ENCODE measurements at regions of chr3 and their contacts with region 1.

Region 1: GRCh38 chr3:50121416-50122032 is 32.8 kb downstream of the RBM5 start:
- DNase-seq: peak; percentile 86
- H3K4me3 Mint-ChIP-seq: no peak overlapping the region
- H3K27ac Mint-ChIP-seq: no peak overlapping the region
- H3K4me1 Mint-ChIP-seq: no peaks in the 10 kb centered on the region
- H3K27me3 Mint-ChIP-seq: no peaks in the 10 kb centered on the region

Region 2: GRCh38 chr3:50133283-50133615 is 11.7 kb after region 1 on chr3:
- CTCF ChIA-PET with region 1: interaction called, 10 read pairs
- intact Hi-C with region 1: no loop called
- DNase-seq: no peak
- H3K4me3 Mint-ChIP-seq: no peak overlapping the region
- H3K27ac Mint-ChIP-seq: no peak overlapping the region
- H3K4me1 Mint-ChIP-seq: peaks cover 2% of the 10 kb centered on the region
- H3K27me3 Mint-ChIP-seq: no peaks in the 10 kb centered on the region

Region 3: DNA sequence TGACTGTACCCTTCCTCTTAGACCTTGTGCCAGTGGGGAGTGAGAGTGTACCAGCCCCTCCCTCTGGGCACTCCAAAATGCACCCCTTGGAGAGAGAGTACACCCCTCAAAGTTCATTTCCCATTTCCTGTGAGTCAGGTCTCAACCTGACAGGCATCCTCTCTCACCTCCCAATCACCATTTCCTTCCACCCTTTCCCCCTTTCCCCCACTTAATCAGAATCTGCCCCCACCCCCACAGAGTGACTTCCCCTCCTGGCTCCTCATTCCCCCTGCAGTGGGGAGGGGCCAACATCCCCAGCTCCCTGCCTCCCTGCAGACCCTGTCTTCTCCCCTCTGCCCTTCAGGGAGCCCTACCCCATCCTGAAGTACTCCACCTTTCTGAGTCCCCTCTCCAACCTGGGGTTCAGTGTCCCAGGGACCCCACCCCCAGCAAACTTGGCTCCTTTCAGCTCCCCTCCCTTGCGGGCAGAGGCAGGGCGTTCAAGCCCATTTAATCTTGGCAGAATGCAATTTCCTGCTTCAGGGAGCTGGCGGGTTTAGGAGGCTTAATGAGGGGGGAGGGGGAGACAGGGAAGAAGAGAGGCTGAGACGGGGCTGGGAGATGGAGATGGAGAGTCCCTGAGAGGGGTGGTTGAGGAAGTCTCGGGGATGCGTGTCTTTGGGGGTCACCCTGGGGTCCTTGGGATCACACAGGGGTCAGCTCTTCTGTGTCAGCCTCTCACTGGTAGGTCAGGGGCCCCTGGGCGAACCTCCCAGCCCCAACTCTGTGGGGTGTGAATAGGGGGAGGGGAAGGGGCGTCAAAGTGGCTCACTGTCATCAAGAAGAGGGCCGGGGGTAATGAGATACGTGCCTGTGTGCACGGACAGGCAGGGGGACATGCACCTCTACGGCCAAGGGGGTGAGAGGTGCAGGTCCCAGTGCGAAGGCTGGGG is 17.0 kb after region 1 on chr3:
- CTCF ChIA-PET with region 1: interaction called, 10 read pairs
- intact Hi-C with region 1: no loop called
- DNase-seq: peak; percentile 16
- H3K4me3 Mint-ChIP-seq: no peak overlapping the region
- H3K27ac Mint-ChIP-seq: no peak overlapping the region
- H3K4me1 Mint-ChIP-seq: peaks cover 10% of the 10 kb centered on the region
- H3K27me3 Mint-ChIP-seq: peaks cover 2% of the 10 kb centered on the region

Region 4: DNA sequence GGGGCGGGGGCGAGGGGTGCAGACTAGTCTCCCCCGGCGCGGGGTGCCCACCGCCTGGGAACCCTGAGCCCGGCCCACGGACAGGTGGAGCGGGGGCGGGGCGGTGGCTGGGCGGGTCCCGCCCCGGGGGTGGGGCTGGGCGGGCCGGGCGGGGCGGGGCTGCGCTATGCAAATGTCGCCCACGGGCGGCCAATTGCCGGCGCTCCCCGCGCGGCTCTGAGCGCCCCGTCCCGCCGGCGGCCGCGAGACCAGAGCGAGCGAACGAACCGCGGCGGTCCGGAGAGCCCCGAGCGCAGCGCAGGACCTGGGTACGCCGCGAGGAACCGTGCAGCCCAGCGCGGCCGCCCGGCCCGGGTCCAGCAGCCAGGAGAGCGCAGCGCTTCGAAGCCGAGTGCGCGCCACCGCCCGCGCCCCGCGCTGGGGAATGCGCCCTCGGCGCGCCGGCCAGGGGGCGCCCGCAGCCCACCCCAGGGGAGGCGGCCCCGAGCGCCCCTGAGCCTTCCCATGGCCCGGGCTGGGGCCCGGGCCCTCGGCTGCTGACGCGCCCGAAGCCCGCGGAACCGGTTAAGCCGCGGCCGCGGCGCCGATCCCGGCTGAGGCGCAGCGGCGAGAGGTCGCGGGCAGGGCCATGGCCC is 33.4 kb after region 1 on chr3 and contains the start of gene SEMA3F:
- CTCF ChIA-PET with region 1: interaction called, 4 read pairs
- intact Hi-C with region 1: loop called (anchors 1 kb)
- DNase-seq: peak; percentile 50
- H3K4me3 Mint-ChIP-seq: peak within 1 kb of the TSS; percentile 65
- H3K27ac Mint-ChIP-seq: no peak within 1 kb of the TSS
- H3K4me1 Mint-ChIP-seq: peaks cover 6% of the 10 kb centered on the region
- H3K27me3 Mint-ChIP-seq: peaks cover 26% of the 10 kb centered on the region
- total RNA-seq, gene SEMA3F: not detected

Measured in activated naive CD4-positive, alpha-beta T cell treated with anti-CD3 and anti-CD28 coated beads for 36 hours (primary cell).